Mammary epithelial cell (primary cell): ENCODE measurements at regions of chr6 and their contacts with region 1.

Region 1: GRCh38 chr6:42315991-42316378 is 98.3 kb upstream of the MRPS10 start:
- DNase-seq: peak; percentile 83
- H3K4me3 ChIP-seq: no peak overlapping the region
- H3K27ac ChIP-seq: peak overlapping the region; percentile 37
- H3K4me1 ChIP-seq: peaks cover 28% of the 10 kb centered on the region
- H3K27me3 ChIP-seq: no peaks in the 10 kb centered on the region
- CTCF ChIP-seq: no peak

Region 2: DNA sequence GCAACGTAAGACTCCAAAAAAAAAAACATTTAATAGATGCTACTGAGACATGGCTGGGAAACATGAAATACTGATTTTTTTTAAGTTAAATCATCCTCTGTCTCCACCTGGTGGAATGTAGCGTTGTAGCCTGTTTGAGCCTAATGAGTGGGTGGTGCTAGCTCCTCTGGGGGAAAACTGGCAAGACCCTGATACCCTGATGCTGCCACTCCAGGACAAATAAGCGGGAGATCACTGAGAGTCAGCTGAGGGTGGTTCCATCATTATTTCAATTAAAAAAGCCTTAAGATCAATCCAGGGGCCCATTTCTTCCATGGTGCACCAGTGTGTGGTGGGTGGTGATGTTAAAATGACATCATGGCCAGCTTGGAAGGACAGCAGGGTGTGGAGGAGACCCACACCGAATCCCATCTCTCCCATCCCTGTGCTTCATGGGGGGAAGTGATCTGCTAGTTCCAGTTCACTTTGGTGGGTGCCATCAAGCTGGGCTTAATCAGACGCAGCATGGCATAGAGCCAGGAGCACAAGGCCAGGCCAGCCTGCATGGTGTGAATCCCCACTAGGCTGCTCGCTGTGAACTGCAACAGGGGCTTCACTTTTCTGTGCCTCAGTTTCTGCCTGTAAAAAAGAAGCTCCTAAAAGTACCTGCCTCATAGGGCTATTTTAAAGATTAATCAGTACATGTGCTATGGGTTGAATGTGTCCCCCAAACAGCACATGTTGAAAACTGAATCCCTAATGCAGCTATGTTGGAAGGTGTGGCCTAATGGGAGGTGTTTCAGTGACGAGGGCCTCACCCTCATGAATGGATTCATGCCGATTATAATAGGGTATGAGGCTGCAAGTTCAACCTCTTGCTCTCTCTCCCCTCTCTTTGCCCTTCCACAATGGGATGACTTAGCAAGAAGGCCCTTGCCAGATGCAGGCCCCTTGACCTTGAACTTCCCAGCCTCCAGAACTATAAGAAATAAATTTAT is 85.4 kb before region 1 on chr6:
- CTCF ChIA-PET with region 1: interaction called, 14 read pairs
- dilution Hi-C with region 1: no loop called
- in situ Hi-C with region 1: no loop called
- intact Hi-C with region 1: no loop called
- DNase-seq: no peak
- H3K4me3 ChIP-seq: no peak overlapping the region
- H3K27ac ChIP-seq: peak overlapping the region; percentile 45
- H3K4me1 ChIP-seq: peaks cover 38% of the 10 kb centered on the region
- H3K27me3 ChIP-seq: no peaks in the 10 kb centered on the region
- CTCF ChIP-seq: peak; percentile 68 to 69

Region 3: DNA sequence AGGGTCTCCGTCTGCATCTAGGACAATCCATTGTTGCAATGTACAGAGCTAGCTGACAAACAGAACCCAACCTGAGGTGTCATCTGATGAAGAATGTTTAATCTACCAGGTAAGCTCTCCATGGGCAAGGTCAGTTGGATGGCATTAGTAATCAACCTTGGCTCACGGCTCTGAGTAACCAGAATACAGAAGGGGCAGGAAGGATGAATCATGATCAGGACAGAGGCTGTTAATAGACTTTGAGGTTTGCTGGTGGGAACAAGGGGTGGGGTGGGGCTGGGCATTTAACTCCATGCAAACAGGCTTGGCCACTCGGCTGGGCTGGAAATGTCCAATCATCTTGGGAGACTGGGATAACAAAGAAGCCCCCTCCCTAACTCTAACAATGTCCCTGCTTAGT is 21.2 kb before region 1 on chr6:
- CTCF ChIA-PET with region 1: no interaction called
- dilution Hi-C with region 1: no loop called
- in situ Hi-C with region 1: no loop called
- intact Hi-C with region 1: loop called (anchors 2 kb)
- DNase-seq: peak; percentile 98
- H3K4me3 ChIP-seq: no peak overlapping the region
- H3K27ac ChIP-seq: peak overlapping the region; percentile 90
- H3K4me1 ChIP-seq: peaks cover 60% of the 10 kb centered on the region
- H3K27me3 ChIP-seq: no peaks in the 10 kb centered on the region
- CTCF ChIP-seq: no peak

Region 4: DNA sequence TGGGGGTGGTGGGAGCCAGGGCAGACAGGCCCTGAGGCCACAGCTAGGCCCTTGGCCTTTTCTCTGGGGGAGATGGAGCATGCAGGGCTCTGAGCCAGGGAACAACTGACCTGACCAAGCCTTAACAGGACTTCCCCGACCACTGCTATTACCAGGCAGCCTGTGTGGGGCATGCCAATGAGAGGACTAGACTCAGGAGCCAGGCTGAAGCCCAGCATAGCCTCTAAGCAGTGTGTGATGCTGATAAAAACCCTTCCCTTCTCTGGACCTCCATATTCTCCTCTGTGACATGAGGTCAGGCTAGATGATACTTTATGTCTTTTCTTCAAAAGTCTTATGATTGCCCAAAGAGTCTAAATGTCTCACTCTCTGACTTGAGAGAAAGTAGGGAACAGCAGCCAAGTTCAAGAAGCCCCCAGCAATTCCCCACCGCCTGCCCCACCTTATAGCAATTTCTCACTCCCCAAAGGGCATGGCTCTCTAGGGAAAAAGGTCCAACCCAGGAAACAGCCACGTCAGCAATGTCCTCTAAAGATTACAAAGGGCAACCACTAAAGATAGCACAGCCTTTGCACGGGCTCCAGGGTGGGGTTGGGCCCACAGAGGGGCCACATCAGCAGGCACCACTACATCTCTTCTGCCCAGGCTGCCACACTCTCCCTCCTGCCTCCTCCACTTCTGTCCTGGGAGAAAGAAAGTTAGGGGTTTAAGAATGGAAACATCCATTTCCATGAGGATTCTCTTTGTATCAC is 64.4 kb after region 1 on chr6:
- CTCF ChIA-PET with region 1: no interaction called
- dilution Hi-C with region 1: loop called (anchors 5 kb)
- in situ Hi-C with region 1: no loop called
- intact Hi-C with region 1: no loop called
- DNase-seq: no peak
- H3K4me3 ChIP-seq: no peak overlapping the region
- H3K27ac ChIP-seq: no peak overlapping the region
- H3K4me1 ChIP-seq: no peaks in the 10 kb centered on the region
- H3K27me3 ChIP-seq: no peaks in the 10 kb centered on the region
- CTCF ChIP-seq: no peak